ENCODE measurements at regions of chr16 and their contacts with region 1.

Region 1: DNA sequence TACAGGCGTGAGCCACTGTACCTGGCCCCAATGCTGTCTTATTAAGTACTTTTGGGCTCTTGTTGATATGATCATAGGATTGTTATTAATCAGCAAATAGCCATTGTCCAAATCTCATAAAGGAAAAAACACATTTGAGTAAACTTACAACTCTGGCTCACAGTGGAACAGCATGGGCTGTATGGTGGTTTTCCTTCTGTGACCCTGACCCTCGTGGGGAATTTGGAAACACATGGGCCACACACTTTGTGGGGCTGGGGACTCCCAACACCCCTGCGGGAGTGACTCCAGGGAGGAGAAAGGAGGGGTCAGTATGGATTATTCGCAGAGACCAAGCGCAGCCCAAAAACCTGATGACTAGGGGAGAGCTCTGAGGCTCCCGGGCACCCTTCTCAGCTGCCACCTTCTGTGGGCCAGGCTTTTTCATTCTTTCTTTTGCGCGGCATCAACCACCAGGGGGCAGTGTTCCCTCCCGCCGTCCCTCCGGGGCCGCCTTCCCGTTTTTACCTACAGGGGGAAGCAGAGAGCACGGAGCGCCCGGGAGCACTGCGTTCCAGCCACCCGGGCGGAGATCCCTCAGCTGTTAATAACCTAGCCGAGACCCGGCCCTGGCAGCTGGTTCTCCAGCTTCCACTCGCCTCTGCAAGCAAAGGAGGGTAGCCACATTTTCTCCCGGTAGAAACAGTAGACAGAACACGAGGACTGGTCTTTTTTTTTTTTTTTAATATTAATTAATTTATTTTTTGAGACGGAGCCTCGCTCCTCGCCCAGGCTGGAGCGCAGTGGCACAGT is 9.7 kb downstream of the TSNAXIP1 start:
- DNase-seq: peak; percentile 88
- H3K4me3 ChIP-seq: no peak overlapping the region
- H3K27ac ChIP-seq: no peak overlapping the region
- H3K4me1 ChIP-seq: no peaks in the 10 kb centered on the region
- H3K27me3 ChIP-seq: no peaks in the 10 kb centered on the region
- CTCF ChIP-seq: peak; percentile 100

Region 2: GRCh38 chr16:67833418-67834241 is 17.2 kb after region 1 on chr16:
- CTCF ChIA-PET with region 1: interaction called, 10 read pairs
- POLR2A ChIA-PET with region 1: interaction called, 3 read pairs
- intact Hi-C with region 1: no loop called
- DNase-seq: peak; percentile 94
- H3K4me3 ChIP-seq: peak overlapping the region; percentile 79
- H3K27ac ChIP-seq: peak overlapping the region; percentile 84
- H3K4me1 ChIP-seq: no peaks in the 10 kb centered on the region
- H3K27me3 ChIP-seq: no peaks in the 10 kb centered on the region
- CTCF ChIP-seq: no peak

Region 3: DNA sequence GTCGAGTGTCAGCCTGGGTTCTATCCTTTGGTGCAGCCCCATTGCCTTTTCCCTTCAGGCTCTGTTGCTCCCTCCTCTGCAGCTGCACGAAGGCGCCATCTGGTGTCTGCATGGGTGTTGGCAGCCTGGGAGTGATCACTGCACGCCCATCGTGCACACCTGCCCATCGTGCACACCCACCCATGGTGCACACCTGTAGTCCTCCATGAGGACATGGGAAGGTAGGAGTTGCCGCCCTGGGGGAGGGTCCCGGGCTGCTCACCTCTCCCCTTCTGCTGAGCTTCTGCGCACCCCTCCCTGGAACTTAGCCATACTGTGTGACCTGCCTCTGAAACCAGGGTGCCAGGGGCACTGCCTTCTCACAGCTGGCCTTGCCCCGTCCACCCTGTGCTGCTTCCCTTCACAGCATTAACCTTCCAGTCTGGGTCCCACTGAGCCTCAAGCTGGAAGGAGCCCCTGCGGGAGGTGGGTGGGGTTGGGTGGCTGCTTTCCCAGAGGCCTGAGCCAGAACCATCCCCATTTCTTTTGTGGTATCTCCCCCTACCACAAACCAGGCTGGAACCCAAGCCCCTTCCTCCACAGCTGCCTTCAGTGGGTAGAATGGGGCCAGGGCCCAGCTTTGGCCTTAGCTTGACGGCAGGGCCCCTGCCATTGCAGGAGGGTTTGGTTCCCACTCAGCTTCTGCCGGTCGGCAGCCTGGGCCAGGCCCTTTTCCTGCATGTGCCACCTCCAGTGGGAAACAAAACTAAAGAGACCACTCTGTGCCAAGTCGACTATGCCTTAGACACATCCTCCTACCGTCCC is 112.3 kb after region 1 on chr16:
- CTCF ChIA-PET with region 1: interaction called, 12 read pairs
- POLR2A ChIA-PET with region 1: no interaction called
- intact Hi-C with region 1: loop called (anchors 2 kb)
- DNase-seq: peak; percentile 81
- H3K4me3 ChIP-seq: no peak overlapping the region
- H3K27ac ChIP-seq: no peak overlapping the region
- H3K4me1 ChIP-seq: peaks cover 22% of the 10 kb centered on the region
- H3K27me3 ChIP-seq: no peaks in the 10 kb centered on the region
- CTCF ChIP-seq: peak; percentile 94

Region 4: DNA sequence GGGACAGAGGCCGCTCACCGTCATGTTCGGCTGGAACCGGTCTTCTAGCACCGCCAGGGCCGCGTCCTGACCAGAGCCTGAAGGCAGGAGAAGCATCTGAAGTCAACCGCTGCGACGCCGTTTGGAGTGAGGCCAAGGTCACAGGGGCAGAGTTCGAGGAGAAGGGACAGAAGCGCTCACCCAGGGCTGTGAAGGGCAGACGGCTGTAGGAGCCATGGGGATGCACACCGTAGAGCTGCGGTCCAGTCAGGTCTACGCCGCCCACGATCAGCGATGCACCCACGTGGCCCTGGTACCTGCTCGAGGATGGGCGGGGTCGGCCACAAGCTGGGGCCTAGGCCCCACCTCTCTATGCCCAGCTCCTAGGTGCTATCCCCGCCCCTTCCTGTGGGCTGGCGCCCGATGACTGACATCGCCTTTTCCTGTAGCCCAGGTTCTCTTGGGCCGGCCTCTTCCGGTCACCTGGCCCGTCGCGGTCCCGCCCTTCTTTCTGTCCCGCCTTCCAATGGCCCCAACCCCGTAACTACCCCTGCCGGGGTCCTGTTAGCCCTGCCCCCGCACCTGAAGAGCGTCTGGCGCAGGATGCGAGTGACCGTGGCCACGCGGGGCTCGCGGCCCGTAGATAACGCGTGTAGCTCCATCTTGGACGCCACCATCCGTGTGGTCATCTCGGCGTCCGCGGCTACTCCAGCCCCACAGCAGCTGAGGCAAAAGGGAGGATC is 119.1 kb after region 1 on chr16:
- CTCF ChIA-PET with region 1: interaction called, 12 read pairs
- POLR2A ChIA-PET with region 1: no interaction called
- intact Hi-C with region 1: no loop called
- DNase-seq: peak; percentile 96
- H3K4me3 ChIP-seq: peak overlapping the region; percentile 85
- H3K27ac ChIP-seq: peak overlapping the region; percentile 75
- H3K4me1 ChIP-seq: peaks cover 16% of the 10 kb centered on the region
- H3K27me3 ChIP-seq: no peaks in the 10 kb centered on the region
- CTCF ChIP-seq: no peak

Region 5: GRCh38 chr16:68040507-68041288 is 224.3 kb after region 1 on chr16:
- CTCF ChIA-PET with region 1: interaction called, 4 read pairs
- POLR2A ChIA-PET with region 1: no interaction called
- intact Hi-C with region 1: loop called (anchors 10 kb)
- DNase-seq: peak; percentile 72
- H3K4me3 ChIP-seq: no peak overlapping the region
- H3K27ac ChIP-seq: no peak overlapping the region
- H3K4me1 ChIP-seq: no peaks in the 10 kb centered on the region
- H3K27me3 ChIP-seq: no peaks in the 10 kb centered on the region
- CTCF ChIP-seq: peak; percentile 91

Measured in A673 (cell line).